Ovary (tissue), 10 donors: ENCODE measurements at regions of chr10 and their contacts with region 1.

Region 1: DNA sequence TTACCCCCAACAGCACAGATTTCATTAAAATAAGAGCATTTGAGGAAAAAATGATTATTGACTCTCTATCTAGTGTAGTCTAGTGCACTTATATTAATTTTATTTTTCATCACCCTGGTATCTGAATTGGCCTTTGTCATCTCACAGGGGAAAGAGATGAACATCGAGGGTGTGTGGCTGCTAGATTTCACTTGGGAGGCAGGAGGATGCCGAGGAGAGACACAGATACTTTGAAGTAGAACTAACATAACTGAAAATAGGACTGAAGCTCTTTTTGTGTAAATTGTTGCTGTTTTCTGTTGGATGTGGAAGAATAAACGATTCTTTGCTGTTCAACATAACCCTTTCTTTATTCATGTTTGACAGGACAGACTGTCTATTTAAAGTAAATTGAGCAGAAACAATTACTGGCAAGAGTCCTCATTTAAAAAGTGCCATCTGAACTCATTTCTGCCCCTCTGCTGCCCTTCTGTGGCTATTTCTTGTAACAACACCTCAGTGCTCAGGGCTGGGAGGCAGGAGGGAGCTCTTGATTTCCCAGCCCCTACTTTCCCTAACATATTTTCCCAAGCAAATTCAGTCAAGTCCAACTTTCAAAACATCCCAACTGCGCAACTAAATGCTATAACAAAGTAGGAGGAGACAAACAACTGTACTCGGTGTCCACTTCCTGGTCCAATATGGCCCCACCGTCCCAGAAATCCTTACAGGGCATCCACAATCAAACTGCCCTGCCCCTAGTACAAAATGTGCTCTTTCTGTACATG is 15.6 kb downstream of the LYZL1 start:
- DNase-seq: peak; percentile 68 to 82 (median 71)
- H3K4me3 ChIP-seq: no peak overlapping the region
- H3K27ac ChIP-seq: peak overlapping the region in 1 of 2 donors; percentile 4
- H3K4me1 ChIP-seq: no peaks in the 10 kb centered on the region
- H3K27me3 ChIP-seq: no peaks in the 10 kb centered on the region
- CTCF ChIP-seq: peak; percentile 76 to 93 (median 85)
- EP300 ChIP-seq: no peak
- POLR2A ChIP-seq: no peak

Region 2: GRCh38 chr10:28628184-28628893 is 676.1 kb before region 1 on chr10:
- intact Hi-C with region 1: loop called in 2 of 4 experiments (anchors 10 kb)
- DNase-seq: peak; percentile 82 to 90 (median 87)
- H3K4me3 ChIP-seq: no peak overlapping the region
- H3K27ac ChIP-seq: no peak overlapping the region
- H3K4me1 ChIP-seq: no peaks in the 10 kb centered on the region
- H3K27me3 ChIP-seq: no peaks in the 10 kb centered on the region
- CTCF ChIP-seq: peak; percentile 76 to 81 (median 80)
- EP300 ChIP-seq: no peak
- POLR2A ChIP-seq: no peak

Region 3: DNA sequence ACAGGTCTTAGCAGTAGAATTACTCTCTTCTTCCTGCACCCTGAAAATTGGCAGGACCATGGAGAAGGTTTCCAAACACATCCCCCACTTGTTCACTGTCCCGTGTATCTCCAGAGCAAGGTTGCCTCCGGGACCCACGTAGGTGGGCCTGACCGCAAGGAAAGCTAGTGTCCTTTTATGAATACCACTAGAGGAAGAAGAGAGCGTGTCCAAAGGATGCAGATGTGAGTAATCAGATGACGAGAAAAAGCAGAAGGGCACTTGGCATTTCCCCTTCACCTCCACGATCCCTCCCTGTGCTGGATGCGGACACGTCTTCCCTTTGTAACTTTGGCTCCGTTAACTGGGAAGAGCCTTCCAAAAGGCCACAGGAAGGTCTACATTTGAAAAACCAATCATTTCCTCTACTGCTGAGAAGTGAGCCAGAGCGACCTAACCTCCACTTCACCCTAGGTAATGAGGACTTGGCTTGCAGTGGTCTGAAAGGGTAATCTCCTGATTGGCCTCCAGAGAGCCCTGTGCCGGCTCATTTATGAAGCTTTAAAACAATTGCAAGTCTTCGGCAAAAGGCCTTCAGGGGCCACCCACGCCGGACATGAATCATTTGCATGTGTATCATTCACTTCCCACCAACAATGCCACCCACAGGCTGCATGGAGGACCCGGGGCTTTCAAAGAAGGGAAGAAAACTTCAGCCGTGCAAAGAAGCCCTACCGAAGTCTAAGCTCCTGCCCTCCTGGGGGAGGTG is 39.8 kb after region 1 on chr10:
- intact Hi-C with region 1: no loop called
- DNase-seq: no peak
- H3K4me3 ChIP-seq: no peak overlapping the region
- H3K27ac ChIP-seq: no peak overlapping the region
- H3K4me1 ChIP-seq: no peaks in the 10 kb centered on the region
- H3K27me3 ChIP-seq: no peaks in the 10 kb centered on the region
- CTCF ChIP-seq: no peak
- EP300 ChIP-seq: no peak
- POLR2A ChIP-seq: no peak